ENCODE measurements at regions of chr10 and their contacts with region 1.

Region 1: DNA sequence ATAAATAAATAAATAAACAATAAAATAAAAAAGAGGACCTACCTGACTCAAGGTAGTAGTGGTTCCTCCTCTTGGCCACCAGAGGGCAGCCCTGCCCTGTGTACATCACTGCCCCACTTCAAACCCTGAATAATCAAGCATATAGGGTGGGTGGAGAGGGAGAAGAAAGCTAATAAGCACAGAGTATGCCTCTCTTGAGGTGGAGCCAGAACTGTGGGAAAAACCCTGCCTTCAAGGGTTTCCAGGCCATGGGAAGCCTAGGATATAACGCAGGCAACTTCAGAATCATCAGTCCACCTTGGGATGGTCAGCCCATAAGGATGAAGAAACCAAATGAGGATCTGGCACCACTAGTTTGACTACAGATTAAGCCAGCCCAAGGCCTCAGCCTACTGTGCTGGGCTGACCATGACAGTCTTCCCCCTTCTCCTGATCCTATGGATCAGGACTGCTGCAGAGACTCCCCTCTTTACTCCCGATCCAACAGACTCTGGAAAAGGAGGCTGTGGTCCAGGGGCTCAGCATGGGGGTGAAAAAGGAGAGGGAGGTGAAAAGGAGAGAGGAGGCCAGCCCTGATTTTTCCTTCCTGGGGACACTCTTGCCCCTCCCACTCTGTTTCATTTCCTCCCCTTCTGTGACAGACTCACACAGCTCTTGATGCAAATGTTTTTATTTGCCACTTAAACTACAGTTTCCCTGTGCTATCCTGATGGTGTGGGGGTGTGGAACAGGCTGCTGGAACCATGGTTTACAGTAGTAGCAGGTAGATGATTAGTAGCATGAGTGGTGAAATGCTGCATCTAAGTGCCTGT is 10.1 kb downstream of the AVPI1 start:
- DNase-seq: no peak
- ATAC-seq: peak; percentile 80 to 85 (median 82)
- H3K4me3 ChIP-seq: no peak overlapping the region
- H3K27ac ChIP-seq: no peak overlapping the region
- H3K4me1 ChIP-seq: peaks cover 0 to 10% (median under 1%) of the 10 kb centered on the region in 4 donors
- H3K27me3 ChIP-seq: no peaks in the 10 kb centered on the region
- CTCF ChIP-seq: peak; percentile 70 to 93 (median 91)
- POLR2A ChIP-seq: peak; percentile 13

Region 2: GRCh38 chr10:97736902-97737769 is 60.2 kb after region 1 on chr10 and contains the start of gene ZFYVE27:
- intact Hi-C with region 1: loop called in 1 of 2 experiments (anchors 10 kb)
- DNase-seq: peak; percentile 97 to 98 (median 97)
- ATAC-seq: peak; percentile 92 to 95 (median 93)
- H3K4me3 ChIP-seq: peak within 1 kb of the TSS; percentile 85 to 99 (median 95)
- H3K27ac ChIP-seq: peak within 1 kb of the TSS; percentile 80 to 95 (median 93)
- H3K4me1 ChIP-seq: peaks cover 0 to 15% (median 6%) of the 10 kb centered on the region in 4 donors
- H3K27me3 ChIP-seq: no peaks in the 10 kb centered on the region
- CTCF ChIP-seq: no peak
- POLR2A ChIP-seq: peak; percentile 93
- total RNA-seq, gene ZFYVE27: 9.2 to 19.3 (median 12.6) TPM

Measured in right lobe of liver (tissue), 6 donors.